ENCODE measurements at regions of chr5 and their contacts with region 1.

Region 1: DNA sequence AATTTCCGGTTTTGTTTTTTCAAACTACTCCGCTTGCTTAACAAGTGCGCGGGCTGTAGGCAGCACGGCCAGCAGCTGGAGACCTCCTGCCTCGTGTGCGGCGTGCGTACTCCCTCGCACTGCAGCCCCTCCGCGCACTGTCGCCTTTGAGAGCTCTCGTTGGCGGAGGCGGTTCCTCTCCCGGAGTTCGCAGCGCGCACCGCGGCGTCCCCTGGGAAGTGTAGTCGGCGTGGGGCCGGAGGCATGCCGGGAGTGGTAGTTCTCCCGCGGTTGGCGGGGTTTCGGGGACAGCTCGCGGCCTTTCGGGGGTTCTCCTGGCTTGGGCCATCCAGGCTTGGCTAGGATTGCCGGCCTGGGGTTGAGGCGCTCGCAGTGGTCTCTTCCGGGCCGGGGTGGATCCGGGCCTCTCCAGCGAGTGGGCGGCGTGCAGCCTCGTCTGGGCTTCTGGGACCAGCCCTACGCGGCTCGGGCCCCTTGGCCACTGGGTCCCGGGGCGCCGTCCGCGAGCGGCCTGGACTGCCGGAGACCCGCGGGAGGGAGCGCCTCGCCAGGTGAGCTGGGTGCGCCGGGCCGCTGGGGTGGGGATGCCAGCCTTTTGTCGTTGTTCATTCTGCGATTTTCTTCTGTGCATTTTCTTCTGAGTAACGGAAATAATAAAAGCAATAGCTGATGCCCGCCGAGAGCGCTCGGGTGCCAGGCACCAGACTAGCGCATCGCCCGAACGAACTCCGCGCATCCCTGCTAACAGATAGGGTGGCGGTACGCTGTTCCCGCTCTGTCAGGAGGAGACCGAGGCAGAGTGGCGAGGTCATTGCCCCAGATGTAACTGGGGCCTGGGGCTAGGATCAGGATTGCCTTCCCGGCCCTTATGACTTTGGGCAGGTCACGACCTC is at the start of gene ZNF354C:
- DNase-seq: peak; percentile 86
- H3K4me3 Mint-ChIP-seq: peak within 1 kb of the TSS; percentile 89
- H3K27ac Mint-ChIP-seq: peak within 1 kb of the TSS; percentile 75
- H3K4me1 Mint-ChIP-seq: peaks cover 21% of the 10 kb centered on the region
- H3K27me3 Mint-ChIP-seq: no peaks in the 10 kb centered on the region
- total RNA-seq, gene ZNF354C: 5.1 to 6.0 TPM

Region 2: GRCh38 chr5:178732281-178732680 is 328.1 kb before region 1 on chr5:
- CTCF ChIA-PET with region 1: interaction called, 14 read pairs
- POLR2A ChIA-PET with region 1: interaction called, 7 read pairs
- DNase-seq: no peak
- H3K4me3 Mint-ChIP-seq: no peak overlapping the region
- H3K27ac Mint-ChIP-seq: no peak overlapping the region
- H3K4me1 Mint-ChIP-seq: peaks cover 9% of the 10 kb centered on the region
- H3K27me3 Mint-ChIP-seq: no peaks in the 10 kb centered on the region

Region 3: DNA sequence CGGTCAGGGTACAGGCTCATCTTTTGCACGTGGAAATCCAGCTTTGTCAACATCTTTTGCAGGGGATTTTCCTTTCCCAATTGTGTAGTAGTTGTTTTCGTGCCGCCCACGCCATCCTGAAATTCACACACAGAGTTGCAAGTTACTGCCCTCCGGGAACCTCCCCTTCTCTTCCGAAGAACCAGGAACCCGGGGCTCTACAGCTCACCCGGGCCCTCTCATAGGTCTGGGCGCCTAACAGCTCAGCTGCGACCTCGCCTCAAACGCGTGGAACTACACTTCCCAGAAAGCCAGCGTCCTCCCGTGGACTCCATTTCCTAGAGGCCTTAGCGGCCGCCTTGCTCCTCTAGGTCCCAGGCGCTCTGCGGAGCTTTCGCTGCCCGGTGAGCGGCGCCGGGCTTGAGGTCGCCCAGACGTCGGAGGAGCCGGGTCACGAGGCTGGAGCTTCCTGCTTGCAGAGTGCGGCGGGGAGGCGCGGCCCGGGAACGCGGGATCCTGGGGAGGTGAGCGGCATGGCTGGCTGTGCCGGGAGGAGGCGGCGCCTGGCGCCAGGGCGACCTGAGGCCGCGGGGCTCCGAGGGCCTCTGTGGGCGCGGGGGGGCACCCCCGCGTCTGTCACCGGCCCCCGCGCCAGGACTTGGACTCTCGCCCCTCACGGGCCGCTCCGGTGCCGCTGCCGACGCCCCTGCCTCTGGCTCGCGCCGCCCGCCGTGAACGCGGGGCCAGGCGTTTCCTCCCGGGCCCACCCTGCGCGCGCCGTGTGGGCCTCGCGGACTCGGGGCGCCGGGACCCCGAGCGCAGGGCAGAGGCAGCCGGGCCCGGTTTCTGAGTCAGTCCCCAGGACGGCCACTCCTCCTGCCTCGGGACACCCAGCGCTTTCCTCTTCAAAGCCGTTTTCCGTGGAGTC is 200.5 kb before region 1 on chr5 and contains the start of gene ZNF354B:
- CTCF ChIA-PET with region 1: interaction called, 5 read pairs
- POLR2A ChIA-PET with region 1: interaction called, 10 read pairs
- DNase-seq: peak; percentile 85
- H3K4me3 Mint-ChIP-seq: peak within 1 kb of the TSS; percentile 82
- H3K27ac Mint-ChIP-seq: peak within 1 kb of the TSS; percentile 63
- H3K4me1 Mint-ChIP-seq: peaks cover 22% of the 10 kb centered on the region
- H3K27me3 Mint-ChIP-seq: no peaks in the 10 kb centered on the region
- total RNA-seq, gene ZNF354B: 9.5 to 10.6 TPM

Region 4: GRCh38 chr5:179023528-179024430 is 36.6 kb before region 1 on chr5 and contains the start of gene ZNF879:
- CTCF ChIA-PET with region 1: interaction called, 6 read pairs
- POLR2A ChIA-PET with region 1: interaction called, 10 read pairs
- DNase-seq: peak; percentile 93
- H3K4me3 Mint-ChIP-seq: peak within 1 kb of the TSS; percentile 87
- H3K27ac Mint-ChIP-seq: peak within 1 kb of the TSS; percentile 62
- H3K4me1 Mint-ChIP-seq: peaks cover 10% of the 10 kb centered on the region
- H3K27me3 Mint-ChIP-seq: peaks cover 2% of the 10 kb centered on the region
- total RNA-seq, gene ZNF879: 3.9 to 4.7 TPM

Measured in activated CD4-positive, alpha-beta memory T cell treated with anti-CD3 and anti-CD28 coated beads, Interleukin-2, amount 10 ng/mL, durations not matched to agents 7 days and 5 days (primary cell).